ENCODE measurements at regions of chr2 and their contacts with region 1.

Region 1: GRCh38 chr2:197958592-197959150 is 154.3 kb downstream of the PLCL1 start:
- DNase-seq: no peak
- ATAC-seq: peak; percentile 95

Region 2: GRCh38 chr2:197851451-197851850 is 107.2 kb before region 1 on chr2:
- intact Hi-C with region 1: loop called (anchors 5 kb)
- DNase-seq: no peak
- ATAC-seq: no peak

Region 3: DNA sequence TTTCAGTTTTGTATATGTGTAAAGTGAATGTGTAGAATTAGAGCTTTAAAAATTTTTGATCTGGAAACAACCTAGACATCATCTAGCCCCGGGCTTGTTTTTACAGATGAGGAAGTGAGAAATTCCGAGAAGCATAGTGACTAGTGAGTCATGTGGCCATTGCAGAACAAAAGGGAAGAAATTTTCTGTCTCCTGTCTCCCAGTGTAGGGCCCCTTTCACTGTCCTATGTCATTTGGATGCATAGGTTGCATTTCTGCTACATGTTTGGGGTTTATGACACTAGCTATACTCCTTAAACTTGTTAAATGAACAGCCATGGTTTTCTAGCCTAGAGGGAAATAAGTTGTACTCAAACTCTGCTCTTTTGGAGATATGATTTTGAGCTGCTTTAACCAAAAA is 69.6 kb before region 1 on chr2:
- intact Hi-C with region 1: loop called (anchors 5 kb)
- DNase-seq: no peak
- ATAC-seq: no peak

Region 4: GRCh38 chr2:198127627-198128026 is 169.0 kb after region 1 on chr2:
- intact Hi-C with region 1: loop called (anchors 5 kb)
- DNase-seq: no peak
- ATAC-seq: peak; percentile 71

Region 5: GRCh38 chr2:198214114-198214596 is 255.5 kb after region 1 on chr2:
- intact Hi-C with region 1: no loop called
- DNase-seq: no peak
- ATAC-seq: no peak

Measured in Right ventricle myocardium inferior (tissue), 1 donor.